Activated B cell treated with CpG ODN at 0.5 μM for 24 hours (primary cell): ENCODE measurements at regions of chr20 and their contacts with region 1.

Region 1: GRCh38 chr20:33606118-33606771 is 55.9 kb upstream of the C20orf144 start:
- DNase-seq: peak; percentile 16
- ATAC-seq: peak; percentile 69
- H3K4me3 Mint-ChIP-seq: peak overlapping the region; percentile 52
- H3K27ac Mint-ChIP-seq: peak overlapping the region; percentile 87
- H3K4me1 Mint-ChIP-seq: peaks cover 86% of the 10 kb centered on the region
- H3K27me3 Mint-ChIP-seq: no peaks in the 10 kb centered on the region
- CTCF ChIP-seq: no peak

Region 2: DNA sequence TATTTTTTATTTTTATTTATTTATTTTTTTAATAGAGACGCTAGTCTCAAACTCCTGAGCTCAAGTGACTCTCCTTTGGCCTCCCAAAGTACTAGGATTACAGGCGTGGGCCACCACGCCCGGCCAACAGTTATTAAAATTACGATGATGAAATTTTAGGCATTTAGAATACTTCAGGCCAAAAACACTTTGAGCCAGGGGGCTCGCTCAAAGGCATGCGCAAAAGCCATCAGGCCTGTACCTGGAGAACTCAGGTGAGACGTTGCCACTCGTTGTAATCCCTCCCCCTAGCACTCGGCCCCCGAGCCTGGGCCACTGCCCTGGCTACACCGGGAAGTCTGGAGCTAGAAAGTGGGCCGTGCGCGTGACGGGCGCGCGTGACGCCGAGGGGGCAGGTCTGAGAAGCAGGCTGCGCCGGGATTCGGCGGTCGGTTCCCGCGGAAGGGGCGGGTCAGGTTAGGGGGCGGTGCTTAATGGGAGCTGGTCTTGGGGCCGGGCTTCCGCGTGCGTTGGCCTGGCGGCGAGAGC is 116.7 kb before region 1 on chr20:
- CTCF ChIA-PET with region 1: no interaction called
- POLR2A ChIA-PET with region 1: interaction called, 3 read pairs
- intact Hi-C with region 1: loop called (anchors 10 kb)
- DNase-seq: peak; percentile 99
- ATAC-seq: peak; percentile 96
- H3K4me3 Mint-ChIP-seq: peak overlapping the region; percentile 84
- H3K27ac Mint-ChIP-seq: peak overlapping the region; percentile 88
- H3K4me1 Mint-ChIP-seq: peaks cover 15% of the 10 kb centered on the region
- H3K27me3 Mint-ChIP-seq: no peaks in the 10 kb centered on the region
- CTCF ChIP-seq: no peak

Region 3: GRCh38 chr20:33568378-33568777 is 37.9 kb before region 1 on chr20:
- CTCF ChIA-PET with region 1: no interaction called
- POLR2A ChIA-PET with region 1: interaction called, 3 read pairs
- intact Hi-C with region 1: loop called (anchors 5 kb)
- DNase-seq: no peak
- ATAC-seq: peak; percentile 77
- H3K4me3 Mint-ChIP-seq: peak overlapping the region; percentile 45
- H3K27ac Mint-ChIP-seq: peak overlapping the region; percentile 20
- H3K4me1 Mint-ChIP-seq: peaks cover 40% of the 10 kb centered on the region
- H3K27me3 Mint-ChIP-seq: no peaks in the 10 kb centered on the region
- CTCF ChIP-seq: no peak

Region 4: GRCh38 chr20:33638726-33639125 is 32.5 kb after region 1 on chr20:
- CTCF ChIA-PET with region 1: no interaction called
- POLR2A ChIA-PET with region 1: no interaction called
- intact Hi-C with region 1: no loop called
- DNase-seq: no peak
- ATAC-seq: no peak
- H3K4me3 Mint-ChIP-seq: no peak overlapping the region
- H3K27ac Mint-ChIP-seq: no peak overlapping the region
- H3K4me1 Mint-ChIP-seq: no peaks in the 10 kb centered on the region
- H3K27me3 Mint-ChIP-seq: no peaks in the 10 kb centered on the region
- CTCF ChIP-seq: no peak